BJ (cell line): ENCODE measurements at regions of chr2 and their contacts with region 1.

Region 1: GRCh38 chr2:128250229-128251025 is 68.2 kb downstream of the HS6ST1 start:
- DNase-seq: no peak
- H3K4me3 ChIP-seq: no peak overlapping the region
- H3K27me3 ChIP-seq: no peaks in the 10 kb centered on the region
- CTCF ChIP-seq: no peak

Region 2: DNA sequence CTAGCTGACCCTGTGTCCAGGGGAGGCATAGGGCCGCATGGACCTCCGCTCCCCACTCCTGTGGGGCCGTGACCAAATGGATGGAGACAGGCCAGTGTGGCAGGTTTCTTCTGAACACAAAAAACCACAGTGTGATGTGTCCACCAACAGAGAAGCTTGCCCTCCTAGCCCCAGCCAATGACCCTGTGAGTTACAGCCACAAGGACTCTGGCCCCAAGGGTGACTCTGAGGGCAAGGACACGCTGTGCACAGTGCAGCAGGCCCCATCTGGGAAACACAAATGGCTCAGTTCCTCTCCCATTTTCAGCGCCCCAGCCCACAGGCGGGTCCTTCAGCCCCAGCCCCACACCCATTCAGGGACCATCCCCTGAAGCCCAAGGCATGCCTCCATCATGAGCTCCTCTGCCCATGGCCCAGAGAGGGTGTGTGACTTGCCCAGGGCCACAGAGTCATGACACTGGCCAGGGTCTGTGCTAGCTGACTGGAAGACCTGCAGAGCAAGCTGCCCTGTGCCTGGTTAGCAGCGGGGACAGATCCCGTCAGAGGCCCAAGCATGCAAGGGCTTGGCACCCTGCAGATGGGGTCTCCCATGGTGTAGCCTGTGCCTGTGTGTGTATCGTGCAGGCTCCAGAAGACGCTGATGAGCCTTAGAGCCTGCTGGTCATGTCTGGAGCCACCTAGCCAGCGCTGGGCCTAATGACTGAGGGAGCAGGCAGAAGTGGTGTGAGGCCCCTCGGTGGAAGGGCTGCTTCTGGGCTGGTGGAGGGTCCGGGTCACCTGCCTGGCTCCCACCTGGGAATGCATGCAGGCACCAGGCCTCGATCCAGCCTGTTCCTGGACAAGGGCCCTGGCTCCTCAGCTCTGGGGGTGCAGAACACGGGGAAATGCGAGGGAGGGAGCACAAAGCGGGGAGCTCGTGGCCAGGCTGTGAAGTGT is 20.5 kb after region 1 on chr2:
- CTCF ChIA-PET with region 1: no interaction called
- POLR2A ChIA-PET with region 1: interaction called, 11 read pairs
- DNase-seq: no peak
- H3K4me3 ChIP-seq: no peak overlapping the region
- H3K27me3 ChIP-seq: no peaks in the 10 kb centered on the region
- CTCF ChIP-seq: no peak